Caco-2 (cell line): ENCODE measurements at regions of chr3 and their contacts with region 1.

Region 1: DNA sequence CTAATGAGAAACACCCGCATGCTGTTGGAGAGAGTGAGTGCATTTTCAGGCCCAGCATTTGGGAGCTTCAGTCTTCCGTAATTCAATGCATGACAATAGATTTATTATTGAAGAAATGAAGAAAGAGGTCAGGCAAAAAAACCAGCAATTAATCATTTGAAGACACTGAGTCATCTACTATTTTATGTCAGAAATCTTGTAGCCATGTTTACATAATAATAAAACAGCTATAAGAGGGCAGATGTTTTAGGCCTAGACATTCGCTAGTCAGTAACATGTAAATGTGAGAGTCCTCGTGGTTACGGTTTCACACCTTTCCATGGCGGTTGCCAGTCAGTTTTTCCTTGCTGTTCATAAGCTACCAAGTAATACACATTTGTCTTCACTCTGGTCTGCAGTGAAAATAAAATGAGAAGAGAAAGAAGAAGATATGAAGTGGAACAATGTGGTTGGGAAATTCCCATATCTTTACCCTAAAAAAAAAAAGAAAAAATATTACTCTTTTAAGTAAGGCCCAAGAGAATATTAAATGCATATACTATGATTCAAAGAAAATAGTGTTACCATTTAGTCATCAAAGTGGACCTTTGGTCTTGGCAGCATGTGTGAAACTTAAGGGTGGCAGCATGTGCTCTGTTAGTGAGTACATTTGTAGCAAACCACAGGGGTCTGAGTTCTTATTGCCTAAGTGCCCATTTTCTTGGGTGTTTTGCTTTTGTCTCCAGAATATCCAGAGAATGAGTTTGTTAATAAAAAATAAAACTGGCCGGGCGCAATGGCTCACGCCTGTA is 140.5 kb upstream of the TBL1XR1 start:
- DNase-seq: no peak
- H3K4me3 ChIP-seq: no peak overlapping the region
- H3K4me3 Mint-ChIP-seq: peak overlapping the region; percentile 33
- H3K27ac Mint-ChIP-seq: peak overlapping the region; percentile 53
- H3K4me1 ChIP-seq: peaks cover 36% of the 10 kb centered on the region
- H3K4me1 Mint-ChIP-seq: peaks cover 14% of the 10 kb centered on the region
- H3K27me3 ChIP-seq: no peaks in the 10 kb centered on the region
- H3K27me3 Mint-ChIP-seq: no peaks in the 10 kb centered on the region
- CTCF ChIP-seq: no peak

Region 2: GRCh38 chr3:176987901-176988650 is 349.7 kb before region 1 on chr3:
- CTCF ChIA-PET with region 1: no interaction called
- POLR2A ChIA-PET with region 1: no interaction called
- intact Hi-C with region 1: no loop called
- DNase-seq: no peak
- H3K4me3 ChIP-seq: no peak overlapping the region
- H3K4me3 Mint-ChIP-seq: no peak overlapping the region
- H3K27ac Mint-ChIP-seq: no peak overlapping the region
- H3K4me1 ChIP-seq: peaks cover 5% of the 10 kb centered on the region; the same call in 1 of the 2 replicates
- H3K4me1 Mint-ChIP-seq: peaks cover 8% of the 10 kb centered on the region
- H3K27me3 ChIP-seq: no peaks in the 10 kb centered on the region
- H3K27me3 Mint-ChIP-seq: no peaks in the 10 kb centered on the region
- CTCF ChIP-seq: no peak

Region 3: DNA sequence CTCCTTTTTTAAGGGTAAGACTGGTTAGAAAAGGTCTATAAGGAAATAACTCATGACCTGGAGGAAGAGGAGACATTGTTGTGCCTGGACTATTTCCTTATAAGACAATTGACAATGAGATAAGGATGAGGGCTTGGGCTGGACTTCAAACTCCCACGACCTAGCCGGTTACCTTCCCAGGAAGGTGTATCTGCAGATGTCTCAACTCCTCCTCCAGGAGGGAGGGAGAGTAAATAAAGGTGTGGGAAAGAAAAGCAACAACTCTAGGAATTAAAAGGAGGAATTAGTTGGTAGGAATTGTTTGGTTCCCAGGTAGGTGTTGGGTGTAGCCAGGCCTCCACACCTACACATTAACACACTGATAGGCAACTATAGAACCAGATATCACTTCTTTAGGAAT is 42.6 kb before region 1 on chr3:
- CTCF ChIA-PET with region 1: interaction called, 4 read pairs
- POLR2A ChIA-PET with region 1: interaction called, 3 read pairs
- intact Hi-C with region 1: loop called (anchors 1 kb)
- DNase-seq: peak; percentile 75 to 91
- H3K4me3 ChIP-seq: no peak overlapping the region
- H3K4me3 Mint-ChIP-seq: peak overlapping the region; percentile 37
- H3K27ac Mint-ChIP-seq: peak overlapping the region; percentile 78
- H3K4me1 ChIP-seq: peaks cover 34% of the 10 kb centered on the region
- H3K4me1 Mint-ChIP-seq: peaks cover 7% of the 10 kb centered on the region
- H3K27me3 ChIP-seq: no peaks in the 10 kb centered on the region
- H3K27me3 Mint-ChIP-seq: no peaks in the 10 kb centered on the region
- CTCF ChIP-seq: no peak

Region 4: DNA sequence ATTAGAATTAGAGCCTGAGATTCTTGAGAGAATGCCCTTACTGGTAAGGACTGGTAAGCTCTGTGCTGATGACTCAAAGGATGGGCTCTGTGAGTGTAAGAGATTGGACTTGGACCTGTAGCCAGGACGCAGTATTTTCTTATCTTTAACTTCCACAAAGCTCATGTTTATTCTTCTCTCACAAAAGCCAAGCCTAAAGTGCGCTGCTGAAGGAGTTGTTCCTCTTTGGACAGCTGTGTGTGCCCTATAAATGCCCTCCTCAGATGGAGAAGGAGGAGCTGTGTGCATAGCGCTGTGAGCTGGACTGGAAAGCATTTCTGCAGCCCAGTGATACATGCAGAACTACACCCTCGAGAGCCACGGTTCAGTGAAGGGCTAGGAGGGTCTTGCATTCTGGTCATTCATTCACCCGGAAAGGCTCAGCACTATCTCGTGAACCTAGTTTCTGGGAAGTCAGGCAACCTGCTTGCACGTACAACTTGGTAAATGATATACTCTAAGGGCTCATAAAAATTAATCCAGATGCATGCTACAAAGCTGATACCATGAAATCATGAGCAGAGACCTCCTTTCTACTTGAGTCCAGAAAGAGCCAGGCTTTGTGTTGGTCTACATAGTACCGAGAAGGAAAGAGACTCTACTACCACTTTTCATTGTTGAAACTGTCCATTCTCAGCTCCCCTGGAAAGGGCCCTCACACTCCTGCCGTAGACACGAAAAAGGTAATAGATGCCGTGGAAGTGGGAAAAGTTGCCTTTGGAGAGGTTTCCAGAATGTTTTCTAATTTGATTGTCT is 37.5 kb before region 1 on chr3:
- CTCF ChIA-PET with region 1: interaction called, 8 read pairs
- POLR2A ChIA-PET with region 1: interaction called, 3 read pairs
- intact Hi-C with region 1: loop called (anchors 1 kb)
- DNase-seq: peak; percentile 79 to 95
- H3K4me3 ChIP-seq: peak overlapping the region; percentile 34
- H3K4me3 Mint-ChIP-seq: peak overlapping the region; percentile 68
- H3K27ac Mint-ChIP-seq: peak overlapping the region; percentile 82
- H3K4me1 ChIP-seq: peaks cover 30% of the 10 kb centered on the region
- H3K4me1 Mint-ChIP-seq: peaks cover 6% of the 10 kb centered on the region
- H3K27me3 ChIP-seq: no peaks in the 10 kb centered on the region
- H3K27me3 Mint-ChIP-seq: no peaks in the 10 kb centered on the region
- CTCF ChIP-seq: no peak

Region 5: GRCh38 chr3:177320765-177321247 is 16.9 kb before region 1 on chr3:
- CTCF ChIA-PET with region 1: no interaction called
- POLR2A ChIA-PET with region 1: no interaction called
- intact Hi-C with region 1: loop called (anchors 2 kb)
- DNase-seq: no peak
- H3K4me3 ChIP-seq: no peak overlapping the region
- H3K4me3 Mint-ChIP-seq: no peak overlapping the region
- H3K27ac Mint-ChIP-seq: no peak overlapping the region
- H3K4me1 ChIP-seq: no peaks in the 10 kb centered on the region; the same call in 1 of the 2 replicates
- H3K4me1 Mint-ChIP-seq: peaks cover 8% of the 10 kb centered on the region
- H3K27me3 ChIP-seq: no peaks in the 10 kb centered on the region
- H3K27me3 Mint-ChIP-seq: no peaks in the 10 kb centered on the region
- CTCF ChIP-seq: no peak